CD4-positive, alpha-beta T cell (primary cell): ENCODE measurements at regions of chr1 and their contacts with region 1.

Region 1: DNA sequence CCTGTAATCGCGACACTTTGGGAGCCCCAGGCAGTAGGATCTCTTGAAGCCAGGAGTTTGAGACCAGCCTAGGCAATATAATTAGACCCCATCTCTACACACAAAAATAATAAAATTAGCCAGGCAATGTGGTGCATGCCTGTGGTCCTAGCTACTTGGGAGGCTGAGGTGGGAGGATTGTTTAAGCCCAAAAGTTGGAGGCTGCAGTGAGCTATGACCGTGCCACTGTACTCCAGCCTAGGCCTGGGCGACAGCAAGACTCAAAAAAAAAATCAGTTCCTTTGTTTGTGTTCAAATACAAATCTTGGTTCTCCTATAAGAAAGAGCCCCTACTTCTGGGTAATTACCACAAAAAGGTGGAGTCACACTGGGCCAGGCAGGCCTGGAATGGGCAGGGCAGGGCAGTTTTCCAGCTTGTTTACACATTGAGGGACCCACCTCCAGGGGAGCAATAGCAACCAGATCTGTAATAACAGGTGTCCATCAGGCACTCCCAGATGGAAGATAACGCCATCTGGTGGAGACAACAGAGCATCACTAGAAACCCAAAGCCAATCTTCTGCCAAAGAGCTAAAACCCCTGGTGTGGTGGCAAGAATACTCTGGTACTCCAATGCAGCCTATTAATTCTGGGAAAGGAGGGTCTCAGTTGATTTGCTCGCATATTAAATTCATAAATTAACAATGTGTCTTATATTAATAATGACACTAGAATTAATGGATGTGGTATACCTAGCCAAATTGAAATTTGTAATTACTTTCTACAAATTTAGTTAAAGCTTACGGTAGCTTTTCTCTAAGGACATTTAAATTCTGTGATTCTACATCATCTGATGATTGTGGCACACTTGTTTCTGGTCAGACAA is 13.2 kb downstream of the PPP1R15B start:
- DNase-seq: peak in 11 of 14 experiments; percentile 26 to 86 (median 47)
- ATAC-seq: peak; percentile 96
- H3K4me3 ChIP-seq: no peak overlapping the region
- H3K4me3 Mint-ChIP-seq: no peak overlapping the region
- H3K27ac ChIP-seq: peak overlapping the region in 1 of 2 donors; percentile 18
- H3K27ac Mint-ChIP-seq: peak overlapping the region; percentile 82
- H3K4me1 ChIP-seq: peaks cover 9% of the 10 kb centered on the region
- H3K4me1 Mint-ChIP-seq: peaks cover 18% of the 10 kb centered on the region
- H3K27me3 ChIP-seq: no peaks in the 10 kb centered on the region
- H3K27me3 Mint-ChIP-seq: no peaks in the 10 kb centered on the region
- CTCF ChIP-seq: peak; percentile 85

Region 2: DNA sequence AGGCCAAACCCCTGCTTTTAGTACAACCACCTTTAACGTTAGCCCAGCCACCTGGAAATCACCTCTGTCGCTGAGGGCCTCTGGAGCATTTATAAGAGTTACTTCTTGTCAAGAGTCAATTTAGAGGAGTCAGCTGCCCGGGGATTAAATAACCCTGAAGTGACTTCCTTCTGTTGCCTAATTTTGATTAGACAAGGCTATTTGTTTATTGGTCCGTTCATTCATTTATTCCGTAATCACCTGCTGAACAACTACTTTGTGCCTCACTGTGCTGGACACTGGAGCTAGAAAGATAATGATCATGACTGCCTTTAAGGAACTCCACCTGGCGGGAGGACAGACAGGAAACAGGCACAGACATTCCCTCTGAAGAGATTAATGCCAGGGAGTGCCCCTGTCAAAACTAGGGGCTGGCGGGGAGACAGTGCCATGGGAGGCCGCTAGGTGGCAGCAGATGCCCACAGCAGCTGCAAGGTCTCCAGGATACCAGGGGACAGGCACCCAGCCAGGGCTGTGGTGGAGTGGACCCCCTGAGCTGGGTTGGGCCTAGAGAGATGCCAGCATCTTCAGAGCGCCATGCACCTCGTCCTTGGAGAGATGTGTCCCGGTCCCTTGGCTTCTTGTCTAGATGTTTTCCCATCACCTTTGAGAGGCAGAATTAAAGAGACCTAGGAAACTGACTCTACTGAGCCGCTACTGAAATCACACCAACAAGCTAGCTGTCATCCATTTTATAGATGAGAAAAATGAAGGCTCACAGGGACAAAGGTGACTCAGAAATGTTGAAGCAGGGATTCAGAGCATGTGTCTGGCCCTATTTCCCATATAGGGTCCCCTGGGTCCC is 236.0 kb before region 1 on chr1:
- CTCF ChIA-PET with region 1: interaction called, 7 read pairs
- POLR2A ChIA-PET with region 1: no interaction called
- intact Hi-C with region 1: loop called (anchors 1 kb)
- DNase-seq: peak; percentile 60 to 86 (median 72)
- ATAC-seq: peak; percentile 98
- H3K4me3 ChIP-seq: no peak overlapping the region
- H3K4me3 Mint-ChIP-seq: no peak overlapping the region
- H3K27ac ChIP-seq: no peak overlapping the region
- H3K27ac Mint-ChIP-seq: no peak overlapping the region
- H3K4me1 ChIP-seq: no peaks in the 10 kb centered on the region
- H3K4me1 Mint-ChIP-seq: no peaks in the 10 kb centered on the region
- H3K27me3 ChIP-seq: no peaks in the 10 kb centered on the region
- H3K27me3 Mint-ChIP-seq: peaks cover 18% of the 10 kb centered on the region
- CTCF ChIP-seq: peak; percentile 99

Region 3: GRCh38 chr1:204380411-204380872 is 18.0 kb before region 1 on chr1:
- CTCF ChIA-PET with region 1: interaction called, 23 read pairs
- POLR2A ChIA-PET with region 1: interaction called, 8 read pairs
- intact Hi-C with region 1: no loop called
- DNase-seq: no peak
- ATAC-seq: no peak
- H3K4me3 ChIP-seq: no peak overlapping the region
- H3K4me3 Mint-ChIP-seq: peak overlapping the region; percentile 50
- H3K27ac ChIP-seq: no peak overlapping the region
- H3K27ac Mint-ChIP-seq: no peak overlapping the region
- H3K4me1 ChIP-seq: peaks cover 24% of the 10 kb centered on the region
- H3K4me1 Mint-ChIP-seq: peaks cover 8% of the 10 kb centered on the region
- H3K27me3 ChIP-seq: peaks cover 20 to 22% of the 10 kb centered on the region in 2 experiments
- H3K27me3 Mint-ChIP-seq: peaks cover 28% of the 10 kb centered on the region
- CTCF ChIP-seq: no peak

Region 4: DNA sequence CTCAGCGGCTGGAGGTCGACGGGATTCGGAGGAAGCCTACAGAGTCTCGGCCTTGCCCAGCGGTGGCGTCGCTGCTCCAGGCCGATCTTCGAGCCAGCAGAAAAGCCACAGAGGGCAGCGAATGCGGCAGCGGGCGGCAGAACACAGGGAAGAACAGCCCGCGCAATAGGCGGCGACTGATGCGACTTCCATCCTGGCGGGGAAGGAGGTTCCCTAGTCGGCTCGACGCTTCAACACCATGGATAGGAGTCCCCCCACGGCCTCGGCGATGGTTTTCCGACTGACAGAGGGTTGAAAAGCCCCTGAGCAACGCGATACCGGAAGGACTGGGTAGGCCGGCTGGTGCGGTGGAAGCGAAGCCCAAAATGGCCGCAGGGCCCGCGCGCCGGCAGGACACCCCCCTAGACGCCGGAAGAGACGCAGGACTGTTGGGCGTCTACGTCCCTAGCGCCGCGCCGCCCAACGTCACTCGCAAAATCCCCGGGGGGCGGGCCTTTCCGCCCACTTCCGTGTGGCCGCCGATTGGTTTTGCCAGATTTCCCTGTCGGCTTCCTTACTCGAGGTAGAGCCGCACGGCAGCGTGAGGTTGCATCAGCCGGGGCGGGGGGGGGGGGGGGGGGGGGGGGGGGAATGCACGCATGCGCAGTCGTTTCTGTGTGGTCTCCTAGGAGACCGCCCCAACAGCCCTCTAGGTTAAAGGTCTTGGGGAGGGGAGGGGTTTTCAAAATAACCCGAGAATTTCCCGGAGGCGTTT is 13.2 kb after region 1 on chr1 and contains the start of gene PPP1R15B:
- CTCF ChIA-PET with region 1: interaction called, 55 read pairs
- POLR2A ChIA-PET with region 1: interaction called, 10 read pairs
- intact Hi-C with region 1: no loop called
- DNase-seq: peak; percentile 95 to 99 (median 97)
- ATAC-seq: peak; percentile 89
- H3K4me3 ChIP-seq: peak within 1 kb of the TSS; percentile 98
- H3K4me3 Mint-ChIP-seq: peak within 1 kb of the TSS; percentile 100
- H3K27ac ChIP-seq: peak within 1 kb of the TSS; percentile 100
- H3K27ac Mint-ChIP-seq: peak within 1 kb of the TSS; percentile 100
- H3K4me1 ChIP-seq: peaks cover 11% of the 10 kb centered on the region
- H3K4me1 Mint-ChIP-seq: peaks cover 25% of the 10 kb centered on the region
- H3K27me3 ChIP-seq: no peaks in the 10 kb centered on the region
- H3K27me3 Mint-ChIP-seq: no peaks in the 10 kb centered on the region
- CTCF ChIP-seq: no peak
- total RNA-seq, gene PPP1R15B: 171 to 179 TPM